ENCODE measurements at regions of chr10 and their contacts with region 1.

Region 1: GRCh38 chr10:62050893-62051433 is 149.5 kb downstream of the ARID5B start:
- DNase-seq: peak; percentile 77
- H3K4me3 Mint-ChIP-seq: peak overlapping the region; percentile 96
- H3K27ac Mint-ChIP-seq: peak overlapping the region; percentile 99
- H3K4me1 Mint-ChIP-seq: peaks cover 86% of the 10 kb centered on the region
- H3K27me3 Mint-ChIP-seq: no peaks in the 10 kb centered on the region

Region 2: GRCh38 chr10:60536529-60537114 is 1514.3 kb before region 1 on chr10:
- intact Hi-C with region 1: loop called (anchors 2 kb)
- DNase-seq: no peak
- H3K4me3 Mint-ChIP-seq: peak overlapping the region; percentile 45
- H3K27ac Mint-ChIP-seq: peak overlapping the region; percentile 87
- H3K4me1 Mint-ChIP-seq: peaks cover 64% of the 10 kb centered on the region
- H3K27me3 Mint-ChIP-seq: no peaks in the 10 kb centered on the region

Region 3: GRCh38 chr10:61452151-61452651 is 598.8 kb before region 1 on chr10:
- intact Hi-C with region 1: no loop called
- DNase-seq: no peak
- H3K4me3 Mint-ChIP-seq: no peak overlapping the region
- H3K27ac Mint-ChIP-seq: no peak overlapping the region
- H3K4me1 Mint-ChIP-seq: no peaks in the 10 kb centered on the region
- H3K27me3 Mint-ChIP-seq: peaks cover 25% of the 10 kb centered on the region

Region 4: GRCh38 chr10:61842755-61843497 is 208.0 kb before region 1 on chr10:
- intact Hi-C with region 1: no loop called
- DNase-seq: no peak
- H3K4me3 Mint-ChIP-seq: no peak overlapping the region
- H3K27ac Mint-ChIP-seq: no peak overlapping the region
- H3K4me1 Mint-ChIP-seq: peaks cover 5% of the 10 kb centered on the region
- H3K27me3 Mint-ChIP-seq: no peaks in the 10 kb centered on the region

Region 5: GRCh38 chr10:61903221-61903927 is 147.6 kb before region 1 on chr10:
- intact Hi-C with region 1: loop called (anchors 1 kb)
- DNase-seq: peak; percentile 69
- H3K4me3 Mint-ChIP-seq: peak overlapping the region; percentile 97
- H3K27ac Mint-ChIP-seq: peak overlapping the region; percentile 95
- H3K4me1 Mint-ChIP-seq: peaks cover 60% of the 10 kb centered on the region
- H3K27me3 Mint-ChIP-seq: no peaks in the 10 kb centered on the region

Region 6: GRCh38 chr10:61992671-61993668 is 58.0 kb before region 1 on chr10:
- intact Hi-C with region 1: loop called (anchors 1 kb)
- DNase-seq: peak; percentile 69
- H3K4me3 Mint-ChIP-seq: peak overlapping the region; percentile 76
- H3K27ac Mint-ChIP-seq: peak overlapping the region; percentile 90
- H3K4me1 Mint-ChIP-seq: peaks cover 86% of the 10 kb centered on the region
- H3K27me3 Mint-ChIP-seq: no peaks in the 10 kb centered on the region

Region 7: DNA sequence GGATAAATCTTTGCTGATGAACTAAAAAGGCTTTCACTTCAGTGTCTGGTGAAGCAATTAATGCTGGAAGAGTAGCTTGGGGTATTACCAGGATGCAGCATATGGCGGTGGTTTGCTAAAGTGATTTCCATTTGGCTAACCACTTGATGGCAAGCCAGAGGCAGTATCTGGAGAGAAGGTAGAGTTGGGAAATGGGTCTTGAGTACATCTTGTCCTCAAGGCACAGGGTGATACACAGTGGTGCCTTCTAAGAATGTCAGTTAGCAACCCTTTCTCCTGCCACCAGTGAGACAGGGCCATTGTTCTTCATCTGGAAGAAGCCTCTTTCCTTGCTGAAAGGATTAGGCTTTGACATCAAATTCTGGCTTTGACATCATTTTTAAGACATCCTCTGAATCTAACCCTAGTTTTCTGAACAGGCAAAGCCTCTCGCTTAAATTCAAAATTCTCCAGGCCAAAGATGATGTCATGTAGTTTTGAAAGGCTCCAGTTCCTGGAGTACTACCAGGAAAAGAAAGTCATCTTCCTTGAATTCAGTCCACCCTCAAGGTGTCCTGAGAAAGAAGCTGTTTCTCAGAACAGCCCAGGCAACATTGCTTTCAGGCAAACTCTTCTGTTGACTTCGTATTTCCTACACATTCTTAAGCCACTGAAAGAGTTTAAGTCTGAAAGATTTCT is 13.0 kb after region 1 on chr10:
- intact Hi-C with region 1: loop called (anchors 1 kb)
- DNase-seq: no peak
- H3K4me3 Mint-ChIP-seq: peak overlapping the region; percentile 61
- H3K27ac Mint-ChIP-seq: peak overlapping the region; percentile 85
- H3K4me1 Mint-ChIP-seq: peaks cover 81% of the 10 kb centered on the region
- H3K27me3 Mint-ChIP-seq: no peaks in the 10 kb centered on the region

Region 8: GRCh38 chr10:62244780-62245467 is 194.0 kb after region 1 on chr10:
- intact Hi-C with region 1: loop called (anchors 1 kb)
- DNase-seq: peak; percentile 47
- H3K4me3 Mint-ChIP-seq: peak overlapping the region; percentile 60
- H3K27ac Mint-ChIP-seq: peak overlapping the region; percentile 45
- H3K4me1 Mint-ChIP-seq: peaks cover 45% of the 10 kb centered on the region
- H3K27me3 Mint-ChIP-seq: no peaks in the 10 kb centered on the region

Region 9: GRCh38 chr10:62851442-62851841 is 800.5 kb after region 1 on chr10:
- intact Hi-C with region 1: loop called (anchors 10 kb)
- DNase-seq: no peak
- H3K4me3 Mint-ChIP-seq: no peak overlapping the region
- H3K27ac Mint-ChIP-seq: peak overlapping the region; percentile 9
- H3K4me1 Mint-ChIP-seq: peaks cover 51% of the 10 kb centered on the region
- H3K27me3 Mint-ChIP-seq: peaks cover 5% of the 10 kb centered on the region